Psoas muscle (tissue), 8 donors: ENCODE measurements at regions of chr10 and their contacts with region 1.

Region 1: DNA sequence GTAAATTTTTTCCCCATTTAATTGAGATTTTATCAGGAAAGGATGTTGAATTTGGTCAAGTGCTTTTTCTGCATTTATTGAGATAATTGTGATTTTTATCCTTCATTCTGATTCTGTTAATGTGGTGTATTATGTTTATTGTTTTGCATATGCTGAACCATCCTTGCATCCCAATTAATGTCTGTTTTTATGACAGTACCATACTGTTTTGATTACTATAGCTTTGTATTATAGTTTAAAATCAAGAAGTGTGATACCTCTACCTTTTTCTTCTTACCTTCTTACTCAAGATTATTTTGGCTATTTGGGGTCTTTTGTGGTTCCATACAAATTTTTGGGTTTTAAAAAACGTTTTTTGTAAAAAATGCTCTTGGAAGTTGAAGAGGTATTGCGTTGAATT is 357.2 kb downstream of the REEP3 start:
- DNase-seq: no peak
- ATAC-seq: no peak
- H3K4me3 ChIP-seq: no peak overlapping the region
- H3K27ac ChIP-seq: no peak overlapping the region
- H3K4me1 ChIP-seq: no peaks in the 10 kb centered on the region
- H3K27me3 ChIP-seq: no peaks in the 10 kb centered on the region
- CTCF ChIP-seq: no peak

Region 2: DNA sequence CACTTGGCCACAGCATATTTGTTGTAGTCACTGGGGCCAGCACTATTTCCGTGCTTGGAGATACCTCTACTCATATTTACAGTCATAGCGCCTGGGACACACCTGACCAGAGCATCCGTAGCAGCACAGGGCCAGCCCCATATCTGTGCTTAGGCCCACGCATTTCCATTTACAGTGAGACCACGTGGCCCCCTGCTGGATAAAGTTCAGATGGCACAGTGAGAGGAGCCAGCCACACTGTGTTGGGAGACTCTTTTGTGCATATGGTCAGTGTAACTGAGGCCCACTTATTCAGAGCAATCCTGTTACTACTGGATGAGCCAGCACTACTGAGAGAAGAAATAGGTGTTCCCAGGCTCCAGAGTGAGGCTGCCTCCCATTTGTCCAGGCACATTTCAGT is 98.1 kb after region 1 on chr10:
- intact Hi-C with region 1: loop called in 1 of 2 experiments (anchors 10 kb)
- DNase-seq: no peak
- ATAC-seq: peak in 1 of 4 donors; percentile 44
- H3K4me3 ChIP-seq: no peak overlapping the region
- H3K27ac ChIP-seq: no peak overlapping the region
- H3K4me1 ChIP-seq: no peaks in the 10 kb centered on the region
- H3K27me3 ChIP-seq: peaks cover 0 to 3% (median 0%) of the 10 kb centered on the region in 3 donors
- CTCF ChIP-seq: peak; percentile 17

Region 3: GRCh38 chr10:64159910-64160872 is 281.8 kb after region 1 on chr10:
- intact Hi-C with region 1: no loop called
- DNase-seq: no peak
- ATAC-seq: no peak
- H3K4me3 ChIP-seq: no peak overlapping the region
- H3K27ac ChIP-seq: no peak overlapping the region
- H3K4me1 ChIP-seq: no peaks in the 10 kb centered on the region
- H3K27me3 ChIP-seq: no peaks in the 10 kb centered on the region
- CTCF ChIP-seq: no peak